ENCODE measurements at regions of chr9 and their contacts with region 1.

Region 1: GRCh38 chr9:98848450-98849149 is 41.1 kb downstream of the GALNT12 start:
- DNase-seq: peak; percentile 90 to 95
- H3K4me3 ChIP-seq: no peak overlapping the region
- H3K27ac ChIP-seq: peak overlapping the region; percentile 48
- H3K4me1 ChIP-seq: peaks cover 22% of the 10 kb centered on the region
- H3K27me3 ChIP-seq: no peaks in the 10 kb centered on the region
- CTCF ChIP-seq: peak; percentile 89

Region 2: GRCh38 chr9:98091881-98092612 is 756.6 kb before region 1 on chr9:
- CTCF ChIA-PET with region 1: no interaction called
- POLR2A ChIA-PET with region 1: interaction called, 28 read pairs
- intact Hi-C with region 1: no loop called
- DNase-seq: no peak
- H3K4me3 ChIP-seq: no peak overlapping the region
- H3K27ac ChIP-seq: no peak overlapping the region
- H3K4me1 ChIP-seq: no peaks in the 10 kb centered on the region
- H3K27me3 ChIP-seq: no peaks in the 10 kb centered on the region
- CTCF ChIP-seq: no peak

Region 3: DNA sequence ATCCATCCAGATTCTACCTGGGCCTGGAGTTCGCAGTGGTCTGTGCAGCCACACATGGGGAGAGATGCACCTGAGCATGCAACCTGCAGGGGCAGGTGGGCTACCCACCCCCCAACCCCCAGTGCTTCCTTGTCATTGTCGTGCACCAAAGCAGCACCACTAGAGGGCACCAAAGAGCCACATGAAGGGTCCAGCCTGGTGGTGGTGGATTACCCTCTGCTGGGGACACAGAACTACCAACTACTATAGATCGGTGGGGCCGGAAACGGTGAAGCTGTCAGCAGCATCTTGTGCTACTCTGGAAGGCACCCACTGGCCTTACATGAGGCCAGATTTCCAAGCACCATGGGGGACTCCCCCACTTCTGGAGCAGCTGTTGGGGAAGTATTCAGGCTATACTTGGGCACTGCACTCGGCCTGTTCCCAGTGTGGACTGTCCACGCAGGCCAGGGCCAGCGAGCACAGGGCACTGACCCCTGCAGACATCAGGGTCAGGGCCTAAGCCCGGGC is 533.0 kb before region 1 on chr9:
- CTCF ChIA-PET with region 1: interaction called, 4 read pairs
- POLR2A ChIA-PET with region 1: no interaction called
- intact Hi-C with region 1: loop called (anchors 1 kb)
- DNase-seq: peak; percentile 68 to 89
- H3K4me3 ChIP-seq: no peak overlapping the region
- H3K27ac ChIP-seq: no peak overlapping the region
- H3K4me1 ChIP-seq: peaks cover 16% of the 10 kb centered on the region
- H3K27me3 ChIP-seq: no peaks in the 10 kb centered on the region
- CTCF ChIP-seq: peak; percentile 98

Region 4: GRCh38 chr9:98551511-98552286 is 296.9 kb before region 1 on chr9:
- CTCF ChIA-PET with region 1: no interaction called
- POLR2A ChIA-PET with region 1: no interaction called
- intact Hi-C with region 1: no loop called
- DNase-seq: peak; percentile 44 to 92
- H3K4me3 ChIP-seq: peak overlapping the region; percentile 9; the same call in 1 of the 2 replicates
- H3K27ac ChIP-seq: peak overlapping the region; percentile 90
- H3K4me1 ChIP-seq: peaks cover 40% of the 10 kb centered on the region
- H3K27me3 ChIP-seq: no peaks in the 10 kb centered on the region
- CTCF ChIP-seq: no peak

Region 5: GRCh38 chr9:98935071-98935505 is 86.5 kb after region 1 on chr9:
- CTCF ChIA-PET with region 1: interaction called, 13 read pairs
- POLR2A ChIA-PET with region 1: no interaction called
- intact Hi-C with region 1: no loop called
- DNase-seq: no peak
- H3K4me3 ChIP-seq: no peak overlapping the region
- H3K27ac ChIP-seq: no peak overlapping the region
- H3K4me1 ChIP-seq: no peaks in the 10 kb centered on the region
- H3K27me3 ChIP-seq: peaks cover 56% of the 10 kb centered on the region
- CTCF ChIP-seq: no peak

Region 6: GRCh38 chr9:99162759-99163364 is 314.3 kb after region 1 on chr9:
- CTCF ChIA-PET with region 1: no interaction called
- POLR2A ChIA-PET with region 1: no interaction called
- intact Hi-C with region 1: loop called (anchors 5 kb)
- DNase-seq: no peak
- H3K4me3 ChIP-seq: no peak overlapping the region
- H3K27ac ChIP-seq: no peak overlapping the region
- H3K4me1 ChIP-seq: no peaks in the 10 kb centered on the region
- H3K27me3 ChIP-seq: no peaks in the 10 kb centered on the region
- CTCF ChIP-seq: peak; percentile 79

Measured in PC-9 (cell line).